ENCODE measurements at regions of chr19 and their contacts with region 1.

Region 1: GRCh38 chr19:15555759-15556633 is 47.7 kb downstream of the CYP4F22 start:
- DNase-seq: peak; percentile 96 to 99 (median 98)
- H3K4me3 ChIP-seq: peak overlapping the region; percentile 16 to 76 (median 58)
- H3K27ac ChIP-seq: no peak overlapping the region
- H3K4me1 ChIP-seq: peaks cover 0 to 20% (median 17%) of the 10 kb centered on the region in 4 experiments
- H3K27me3 ChIP-seq: peaks cover 0 to 6% (median 0%) of the 10 kb centered on the region in 5 experiments

Region 2: GRCh38 chr19:15479391-15480345 is 76.3 kb before region 1 on chr19 and contains the start of gene PGLYRP2:
- CTCF ChIA-PET with region 1: interaction called, 76 read pairs
- POLR2A ChIA-PET with region 1: no interaction called
- DNase-seq: peak; percentile 71 to 85 (median 83)
- H3K4me3 ChIP-seq: no peak within 1 kb of the TSS
- H3K27ac ChIP-seq: no peak within 1 kb of the TSS
- H3K4me1 ChIP-seq: peaks cover 0 to 17% (median 15%) of the 10 kb centered on the region in 4 experiments
- H3K27me3 ChIP-seq: no peaks in the 10 kb centered on the region

Region 3: GRCh38 chr19:15498911-15499317 is 57.1 kb before region 1 on chr19:
- CTCF ChIA-PET with region 1: no interaction called
- POLR2A ChIA-PET with region 1: no interaction called
- DNase-seq: no peak
- H3K4me3 ChIP-seq: no peak overlapping the region
- H3K27ac ChIP-seq: no peak overlapping the region
- H3K4me1 ChIP-seq: no peaks in the 10 kb centered on the region
- H3K27me3 ChIP-seq: peaks cover 0 to 2% (median 0%) of the 10 kb centered on the region in 5 experiments

Region 4: DNA sequence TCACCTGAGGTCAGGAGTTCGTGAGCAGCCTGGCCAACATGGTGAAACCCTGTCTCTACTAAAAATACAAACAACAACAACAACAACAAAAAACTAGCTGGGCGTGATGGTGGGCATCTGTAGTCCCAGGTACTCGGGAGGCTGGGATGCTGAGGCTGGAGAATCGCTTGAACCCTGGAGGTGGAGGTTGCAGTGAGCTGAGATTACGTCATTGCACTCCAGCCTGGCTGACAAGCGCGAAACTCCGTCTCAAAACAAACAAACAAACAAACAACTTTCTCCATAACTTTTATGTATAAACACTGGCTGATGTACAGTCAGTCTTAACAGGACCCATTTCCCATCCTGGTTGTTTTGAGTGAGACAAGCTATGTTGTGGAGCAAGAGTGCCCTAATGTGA is 53.3 kb after region 1 on chr19:
- CTCF ChIA-PET with region 1: no interaction called
- POLR2A ChIA-PET with region 1: no interaction called
- DNase-seq: no peak
- H3K4me3 ChIP-seq: no peak overlapping the region
- H3K27ac ChIP-seq: no peak overlapping the region
- H3K4me1 ChIP-seq: no peaks in the 10 kb centered on the region
- H3K27me3 ChIP-seq: peaks cover 0 to 5% (median 0%) of the 10 kb centered on the region in 5 experiments

Region 5: GRCh38 chr19:15640294-15640903 is 84.4 kb after region 1 on chr19 and contains the start of gene CYP4F3:
- CTCF ChIA-PET with region 1: no interaction called
- POLR2A ChIA-PET with region 1: no interaction called
- DNase-seq: peak in 1 of 3 donors; percentile 24
- H3K4me3 ChIP-seq: no peak within 1 kb of the TSS
- H3K27ac ChIP-seq: no peak within 1 kb of the TSS
- H3K4me1 ChIP-seq: peaks cover 0 to 2% (median under 1%) of the 10 kb centered on the region in 4 experiments
- H3K27me3 ChIP-seq: peaks cover 0 to 10% (median 0%) of the 10 kb centered on the region in 5 experiments

Region 6: DNA sequence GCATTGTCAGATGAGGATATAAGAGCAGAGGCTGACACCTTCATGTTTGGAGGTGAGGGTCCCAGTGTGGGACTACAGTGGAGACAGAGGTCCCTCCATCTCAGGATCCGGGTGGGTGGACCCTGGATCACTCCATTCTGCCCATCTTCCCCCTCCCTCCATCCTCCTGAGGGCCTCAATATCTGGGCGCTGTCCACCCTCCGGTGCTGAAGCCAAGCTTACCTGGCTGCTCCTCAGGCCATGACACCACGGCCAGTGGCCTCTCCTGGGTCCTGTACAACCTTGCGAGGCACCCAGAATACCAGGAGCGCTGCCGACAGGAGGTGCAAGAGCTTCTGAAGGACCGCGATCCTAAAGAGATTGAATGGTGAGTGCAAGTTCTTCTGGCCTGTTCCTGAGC is 128.8 kb after region 1 on chr19:
- CTCF ChIA-PET with region 1: no interaction called
- POLR2A ChIA-PET with region 1: no interaction called
- DNase-seq: peak in 2 of 3 donors; percentile 48 to 50
- H3K4me3 ChIP-seq: no peak overlapping the region
- H3K27ac ChIP-seq: no peak overlapping the region
- H3K4me1 ChIP-seq: no peaks in the 10 kb centered on the region
- H3K27me3 ChIP-seq: peaks cover 0 to 21% (median 2%) of the 10 kb centered on the region in 5 experiments